Transverse colon (tissue), 4 donors: ENCODE measurements at regions of chr1 and their contacts with region 1.

Region 1: DNA sequence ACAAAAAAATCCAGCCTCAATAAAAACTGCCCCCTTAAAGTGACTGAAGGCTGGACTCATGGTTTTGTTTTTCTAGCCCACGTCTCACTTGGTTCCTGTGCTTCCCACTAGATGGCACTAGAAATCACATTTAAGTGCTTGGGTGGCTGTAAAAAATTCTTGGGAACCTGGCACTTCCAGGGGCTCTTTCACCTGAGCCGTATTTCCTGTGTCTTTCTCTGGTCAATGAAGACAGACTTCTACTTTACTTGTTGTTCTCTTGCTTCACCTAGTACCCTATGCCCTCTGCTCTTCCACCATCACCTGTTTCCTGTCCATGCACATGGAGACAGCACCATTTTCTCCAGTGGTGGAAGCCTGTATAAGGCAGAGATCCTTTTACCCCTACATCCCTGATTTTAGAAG is 20.0 kb downstream of the METTL13 start:
- DNase-seq: no peak
- H3K4me3 ChIP-seq: no peak overlapping the region
- H3K27ac ChIP-seq: no peak overlapping the region
- H3K4me1 ChIP-seq: no peaks in the 10 kb centered on the region
- H3K27me3 ChIP-seq: no peaks in the 10 kb centered on the region
- CTCF ChIP-seq: peak; percentile 66 to 75 (median 70)
- EP300 ChIP-seq: no peak
- POLR2A ChIP-seq: no peak

Region 2: GRCh38 chr1:170277985-170278384 is 1523.5 kb before region 1 on chr1:
- in situ Hi-C with region 1: no loop called
- intact Hi-C with region 1: loop called (anchors 5 kb)
- DNase-seq: no peak
- H3K4me3 ChIP-seq: no peak overlapping the region
- H3K27ac ChIP-seq: no peak overlapping the region
- H3K4me1 ChIP-seq: no peaks in the 10 kb centered on the region
- H3K27me3 ChIP-seq: no peaks in the 10 kb centered on the region
- CTCF ChIP-seq: no peak
- EP300 ChIP-seq: no peak
- POLR2A ChIP-seq: no peak

Region 3: GRCh38 chr1:171984850-171985485 is 183.5 kb after region 1 on chr1:
- in situ Hi-C with region 1: loop called (anchors 5 to 10 kb)
- intact Hi-C with region 1: loop called (anchors 5 kb)
- DNase-seq: no peak
- H3K4me3 ChIP-seq: no peak overlapping the region
- H3K27ac ChIP-seq: no peak overlapping the region
- H3K4me1 ChIP-seq: peaks cover 0 to 8% (median 0%) of the 10 kb centered on the region in 4 donors
- H3K27me3 ChIP-seq: no peaks in the 10 kb centered on the region
- CTCF ChIP-seq: peak; percentile 70 to 80 (median 76)
- EP300 ChIP-seq: no peak
- POLR2A ChIP-seq: no peak

Region 4: DNA sequence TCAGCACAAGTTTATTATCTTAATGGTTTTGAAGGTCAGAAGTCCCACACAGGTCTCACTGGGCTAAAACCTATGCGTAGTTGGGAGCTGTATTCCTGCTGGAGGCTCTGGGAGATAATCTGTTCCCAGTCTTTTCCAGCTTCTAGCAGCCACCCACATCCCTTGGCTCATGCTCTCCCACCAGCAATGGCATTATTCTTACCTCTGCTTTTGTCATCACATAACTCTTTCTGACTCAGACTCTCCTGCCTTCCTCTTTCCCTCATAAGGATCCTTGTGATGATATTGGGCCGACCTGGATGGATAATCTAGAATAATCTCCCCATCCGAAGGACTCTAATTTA is 1553.4 kb after region 1 on chr1:
- in situ Hi-C with region 1: no loop called
- intact Hi-C with region 1: loop called (anchors 5 kb)
- DNase-seq: no peak
- H3K4me3 ChIP-seq: no peak overlapping the region
- H3K27ac ChIP-seq: no peak overlapping the region
- H3K4me1 ChIP-seq: no peaks in the 10 kb centered on the region
- H3K27me3 ChIP-seq: no peaks in the 10 kb centered on the region
- CTCF ChIP-seq: no peak
- EP300 ChIP-seq: no peak
- POLR2A ChIP-seq: no peak